ENCODE measurements at regions of chr12 and their contacts with region 1.

Region 1: DNA sequence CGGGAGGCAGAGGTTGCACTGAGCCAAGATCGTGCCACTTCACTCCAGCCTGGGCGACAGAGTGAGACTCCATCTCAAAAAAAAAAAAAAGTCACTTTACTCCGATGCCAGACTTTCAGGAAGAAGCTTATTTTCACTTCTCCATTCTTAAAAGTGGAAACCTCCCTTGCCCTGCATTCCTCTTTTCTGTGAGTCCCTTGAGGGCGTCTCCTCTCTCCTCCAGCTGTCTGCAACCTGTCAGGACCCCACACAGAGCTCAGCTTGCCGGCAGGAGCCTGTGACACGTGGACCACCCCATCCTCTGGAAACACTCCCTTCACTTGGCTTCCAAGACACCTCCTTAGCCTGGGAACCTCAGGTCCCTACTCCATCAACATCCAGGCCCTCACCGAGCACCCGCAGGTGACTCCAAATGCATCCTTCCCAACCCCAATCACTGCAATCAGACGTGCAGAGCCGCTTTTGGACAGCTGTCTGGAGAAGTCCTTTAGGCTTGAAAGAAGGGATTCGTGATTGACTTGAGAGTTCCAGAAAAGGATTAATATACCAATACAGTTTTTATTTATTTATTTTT is 34.3 kb downstream of the SLC15A4 start:
- DNase-seq: no peak
- ATAC-seq: no peak
- H3K4me3 ChIP-seq: no peak overlapping the region
- H3K27ac ChIP-seq: peak overlapping the region in 1 of 4 donors; percentile 10
- H3K4me1 ChIP-seq: peaks cover 0 to 15% of the 10 kb centered on the region in 2 donors
- H3K27me3 ChIP-seq: no peaks in the 10 kb centered on the region
- CTCF ChIP-seq: no peak
- POLR2A ChIP-seq: no peak

Region 2: GRCh38 chr12:128606051-128606450 is 183.4 kb before region 1 on chr12:
- in situ Hi-C with region 1: no loop called
- intact Hi-C with region 1: no loop called
- DNase-seq: no peak
- ATAC-seq: no peak
- H3K4me3 ChIP-seq: no peak overlapping the region
- H3K27ac ChIP-seq: no peak overlapping the region
- H3K4me1 ChIP-seq: no peaks in the 10 kb centered on the region
- H3K27me3 ChIP-seq: no peaks in the 10 kb centered on the region
- CTCF ChIP-seq: no peak
- POLR2A ChIP-seq: no peak

Region 3: GRCh38 chr12:128715485-128715884 is 74.0 kb before region 1 on chr12:
- in situ Hi-C with region 1: no loop called
- intact Hi-C with region 1: no loop called
- DNase-seq: no peak
- ATAC-seq: no peak
- H3K4me3 ChIP-seq: no peak overlapping the region
- H3K27ac ChIP-seq: no peak overlapping the region
- H3K4me1 ChIP-seq: no peaks in the 10 kb centered on the region
- H3K27me3 ChIP-seq: no peaks in the 10 kb centered on the region
- CTCF ChIP-seq: no peak
- POLR2A ChIP-seq: no peak

Region 4: GRCh38 chr12:128823916-128824839 is 34.7 kb after region 1 on chr12 and contains the start of gene SLC15A4:
- in situ Hi-C with region 1: no loop called
- intact Hi-C with region 1: loop called (anchors 5 kb)
- DNase-seq: peak; percentile 96 to 97
- ATAC-seq: peak; percentile 69 to 72
- H3K4me3 ChIP-seq: peak within 1 kb of the TSS; percentile 85 to 93 (median 86)
- H3K27ac ChIP-seq: peak within 1 kb of the TSS; percentile 86 to 98 (median 96)
- H3K4me1 ChIP-seq: peaks cover 48 to 53% of the 10 kb centered on the region in 2 donors
- H3K27me3 ChIP-seq: no peaks in the 10 kb centered on the region
- CTCF ChIP-seq: peak in 4 of 5 experiments; percentile 20 to 34 (median 29)
- POLR2A ChIP-seq: peak; percentile 97 to 99
- total RNA-seq, gene SLC15A4: 59.8 to 122 (median 79.1) TPM

Region 5: DNA sequence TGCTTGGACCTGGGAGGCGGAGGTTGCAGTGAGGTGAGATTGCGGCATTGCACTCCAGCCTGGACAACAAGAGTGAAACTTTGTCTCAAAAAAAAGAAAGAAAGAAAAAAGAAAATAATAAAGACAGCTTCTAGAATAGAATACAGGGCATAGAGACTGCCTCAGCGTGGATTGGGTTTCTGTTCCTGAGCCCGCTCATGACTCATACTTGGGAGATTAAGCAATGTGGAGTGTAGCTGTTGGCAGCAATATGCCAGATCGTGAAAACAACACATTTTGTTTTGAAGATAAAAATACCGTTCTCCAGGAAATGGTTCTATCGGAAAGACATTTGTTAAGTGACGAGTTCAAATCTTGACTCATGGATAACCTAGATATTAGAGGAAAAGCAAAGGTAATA is 131.0 kb after region 1 on chr12:
- in situ Hi-C with region 1: no loop called
- intact Hi-C with region 1: loop called (anchors 5 kb)
- DNase-seq: peak; percentile 65 to 71
- ATAC-seq: peak; percentile 100
- H3K4me3 ChIP-seq: peak overlapping the region in 1 of 4 donors; percentile 36
- H3K27ac ChIP-seq: peak overlapping the region; percentile 20 to 77 (median 64)
- H3K4me1 ChIP-seq: peaks cover 8 to 12% of the 10 kb centered on the region in 2 donors
- H3K27me3 ChIP-seq: no peaks in the 10 kb centered on the region
- CTCF ChIP-seq: no peak
- POLR2A ChIP-seq: no peak

Measured in gastrocnemius medialis (tissue), 4 donors.